ENCODE measurements at regions of chr20 and their contacts with region 1.

Region 1: GRCh38 chr20:34312544-34313217 is 9.5 kb upstream of the AHCY start:
- DNase-seq: peak; percentile 90
- ATAC-seq: peak; percentile 99

Region 2: DNA sequence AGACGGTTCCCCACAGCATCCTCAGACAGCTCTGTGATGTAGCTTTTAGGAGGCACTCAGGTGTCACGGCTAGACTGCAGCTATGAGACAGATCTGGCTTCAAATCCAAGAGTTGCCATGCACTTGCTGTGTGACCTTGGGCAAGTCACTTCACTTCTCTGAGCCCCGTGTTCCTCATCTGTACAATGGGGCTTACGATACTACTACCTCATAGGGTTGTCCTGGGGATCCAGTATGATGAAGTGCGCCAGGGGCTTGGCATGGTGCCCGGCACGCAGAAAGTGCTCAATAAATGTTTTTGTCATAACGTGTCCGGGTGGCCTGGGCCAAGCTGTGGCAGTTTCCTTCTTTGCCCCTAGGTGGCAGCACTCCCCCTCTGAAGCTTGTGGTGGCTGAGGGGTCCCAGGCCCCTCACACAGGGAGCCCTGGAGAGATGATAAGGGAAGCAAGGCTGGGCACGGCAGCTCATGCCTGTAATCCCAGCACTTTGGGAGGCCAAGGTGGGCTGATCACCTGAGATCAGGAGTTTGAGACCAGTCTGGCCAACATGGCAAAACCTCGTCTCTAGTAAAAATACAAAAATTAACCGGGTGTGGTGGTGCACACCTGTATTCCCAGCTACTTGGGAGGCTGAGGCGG is 520.6 kb before region 1 on chr20:
- intact Hi-C with region 1: no loop called
- DNase-seq: peak; percentile 61
- ATAC-seq: peak; percentile 29

Region 3: DNA sequence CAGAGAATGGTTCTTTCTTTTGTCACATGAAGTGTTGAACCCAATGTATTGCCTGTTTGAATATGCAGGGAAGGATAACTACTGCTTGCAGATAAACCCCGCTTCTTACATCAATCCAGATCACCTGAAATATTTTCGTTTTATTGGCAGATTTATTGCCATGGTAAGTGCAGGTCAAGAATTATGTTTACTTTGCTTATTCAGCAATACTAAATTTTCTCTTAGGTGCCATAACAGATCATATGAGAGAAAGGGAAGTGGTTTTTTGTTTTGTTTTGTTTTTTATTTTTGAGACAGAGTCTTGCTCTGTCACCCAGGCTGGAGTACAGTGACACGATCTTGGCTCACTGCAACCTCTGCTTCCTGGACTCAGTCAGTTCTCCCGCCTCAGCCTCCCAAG is 166.9 kb after region 1 on chr20:
- intact Hi-C with region 1: loop called (anchors 10 kb)
- DNase-seq: no peak
- ATAC-seq: no peak

Region 4: DNA sequence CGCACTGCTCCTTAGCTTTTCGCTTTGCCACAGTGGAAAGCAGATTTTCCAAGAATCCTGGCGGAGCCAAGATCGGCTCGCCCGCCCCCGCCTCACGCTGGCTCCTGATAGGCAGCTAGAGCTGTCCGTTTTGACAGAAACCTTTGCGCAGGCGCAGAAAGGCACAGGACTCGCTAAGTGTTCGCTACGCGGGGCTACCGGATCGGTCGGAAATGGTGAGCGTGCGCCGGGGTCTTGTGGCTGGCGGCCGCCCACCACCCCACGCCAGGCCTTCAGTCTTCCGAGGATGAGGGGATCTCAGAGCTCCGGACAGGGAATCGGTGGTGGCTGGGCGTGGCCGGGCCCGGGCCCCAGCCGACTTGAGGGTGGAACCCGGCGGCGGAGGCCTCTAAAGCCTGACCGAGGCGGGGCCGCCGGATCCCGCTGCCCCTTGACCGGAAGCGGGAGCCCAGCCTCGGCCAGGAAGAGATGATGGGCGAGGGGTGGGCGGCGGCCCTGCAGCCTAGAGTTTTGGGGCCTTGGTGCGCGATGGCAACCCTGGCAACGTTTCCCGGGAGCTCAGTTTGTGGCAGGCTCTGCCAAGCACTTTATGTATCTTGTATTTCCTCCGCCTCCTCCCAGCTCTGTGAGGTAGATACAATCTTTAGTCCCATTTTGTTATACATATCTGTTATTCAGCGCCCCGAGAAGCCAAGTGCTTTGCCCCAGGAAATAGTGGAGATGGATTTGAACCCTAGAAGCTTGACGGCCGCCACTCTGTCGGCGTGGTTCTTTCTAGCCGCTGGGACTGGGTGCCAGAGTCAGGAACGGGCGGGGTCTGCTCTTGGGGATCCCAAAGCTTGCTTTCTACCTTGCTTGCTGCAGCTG is 203.8 kb after region 1 on chr20 and contains the start of gene DYNLRB1:
- intact Hi-C with region 1: loop called (anchors 10 kb)
- DNase-seq: peak; percentile 97
- ATAC-seq: peak; percentile 97
- total RNA-seq, gene DYNLRB1: 148 TPM

Region 5: DNA sequence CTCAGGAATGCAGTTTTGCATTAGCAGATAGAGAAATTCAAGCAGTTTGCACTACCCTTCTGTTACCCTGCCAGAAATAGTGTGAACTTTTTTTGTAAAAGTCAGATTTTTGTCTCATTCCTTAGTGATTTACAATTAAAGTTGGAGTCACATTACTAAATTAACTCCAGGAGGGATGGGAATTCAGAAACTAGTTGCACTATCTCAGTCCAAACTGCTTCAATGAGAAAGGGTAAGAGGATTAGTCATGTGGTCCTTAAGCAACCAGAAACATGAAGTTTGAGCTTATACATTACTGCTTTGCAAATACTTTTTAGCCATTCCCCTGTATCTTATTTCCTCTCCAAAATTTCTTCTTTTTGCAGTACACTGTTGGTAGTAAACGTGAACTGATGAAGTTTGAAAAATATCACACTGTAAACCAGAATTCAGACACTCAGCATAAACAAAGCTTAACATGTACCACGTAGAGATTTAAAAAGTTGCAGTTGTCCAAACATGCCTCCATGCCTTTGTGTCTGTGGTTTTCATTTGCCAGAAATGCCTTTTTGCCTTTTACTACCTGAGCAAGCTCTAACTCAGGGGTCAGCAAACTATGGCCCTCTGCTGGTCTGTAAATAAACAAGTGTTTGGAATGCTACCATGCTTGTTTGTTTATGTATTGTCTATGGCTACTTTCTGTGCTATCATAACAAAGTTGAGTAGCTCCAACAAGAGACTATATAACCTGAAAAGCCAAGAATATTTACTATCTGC is 441.2 kb after region 1 on chr20:
- intact Hi-C with region 1: loop called (anchors 10 kb)
- DNase-seq: no peak
- ATAC-seq: peak; percentile 57